ENCODE measurements at regions of chr1 and their contacts with region 1.

Region 1: DNA sequence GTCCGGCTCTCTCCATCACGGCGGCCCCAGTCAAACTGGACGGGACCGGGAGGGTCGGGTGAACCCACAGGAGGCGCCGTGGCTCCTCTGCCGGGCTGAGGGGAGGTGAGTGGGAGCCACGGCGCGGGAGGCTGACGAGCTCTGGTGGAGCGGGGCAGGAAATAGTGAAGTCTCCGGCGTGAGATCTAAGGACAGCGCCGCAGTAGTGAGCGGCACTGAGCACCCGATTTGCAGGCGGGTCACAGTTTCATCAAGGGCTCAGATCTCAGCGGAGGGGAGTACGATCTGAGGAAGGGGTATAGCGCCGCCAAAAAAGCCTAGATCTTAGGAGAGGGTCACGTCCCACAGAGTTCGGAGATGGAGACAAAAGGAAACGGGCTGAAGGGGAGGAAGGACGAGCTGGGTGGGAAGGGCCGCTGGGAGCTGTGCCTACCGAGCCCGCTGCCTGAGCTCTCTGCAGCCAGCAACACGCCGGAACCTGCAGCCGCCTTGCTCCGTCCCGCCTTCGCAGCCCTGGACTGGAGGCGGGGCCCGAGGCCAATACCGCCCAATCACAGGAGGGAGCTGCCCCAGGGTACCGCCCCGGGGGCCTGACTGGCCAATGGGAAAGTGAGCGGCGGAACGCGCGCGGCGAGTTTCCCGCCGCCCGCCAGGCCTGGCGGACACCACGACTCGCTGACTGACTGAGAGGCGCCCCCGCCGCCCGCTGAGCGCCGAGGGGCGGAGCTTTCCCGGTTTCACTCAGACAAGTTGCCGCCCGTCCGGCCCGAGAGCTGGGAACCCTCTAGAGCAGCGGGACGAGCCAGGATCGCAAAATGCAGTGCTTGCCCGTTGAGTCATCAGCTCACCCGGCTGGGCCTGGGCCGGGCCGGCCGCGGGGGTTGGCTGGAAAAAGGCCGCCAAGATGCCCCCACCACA is 1.9 kb downstream of the SFN start:
- DNase-seq: peak; percentile 96 to 99 (median 98)
- ATAC-seq: peak; percentile 98 to 99 (median 98)
- H3K4me3 ChIP-seq: peak overlapping the region; percentile 22 to 78 (median 66)
- H3K27ac ChIP-seq: peak overlapping the region; percentile 86 to 99 (median 95)
- H3K4me1 ChIP-seq: peaks cover 0 to 19% (median 9%) of the 10 kb centered on the region in 12 donors
- H3K27me3 ChIP-seq: no peaks in the 10 kb centered on the region
- CTCF ChIP-seq: peak in 2 of 12 donors; percentile 4 to 8
- POLR2A ChIP-seq: peak in 1 of 2 donors; percentile 74

Region 2: DNA sequence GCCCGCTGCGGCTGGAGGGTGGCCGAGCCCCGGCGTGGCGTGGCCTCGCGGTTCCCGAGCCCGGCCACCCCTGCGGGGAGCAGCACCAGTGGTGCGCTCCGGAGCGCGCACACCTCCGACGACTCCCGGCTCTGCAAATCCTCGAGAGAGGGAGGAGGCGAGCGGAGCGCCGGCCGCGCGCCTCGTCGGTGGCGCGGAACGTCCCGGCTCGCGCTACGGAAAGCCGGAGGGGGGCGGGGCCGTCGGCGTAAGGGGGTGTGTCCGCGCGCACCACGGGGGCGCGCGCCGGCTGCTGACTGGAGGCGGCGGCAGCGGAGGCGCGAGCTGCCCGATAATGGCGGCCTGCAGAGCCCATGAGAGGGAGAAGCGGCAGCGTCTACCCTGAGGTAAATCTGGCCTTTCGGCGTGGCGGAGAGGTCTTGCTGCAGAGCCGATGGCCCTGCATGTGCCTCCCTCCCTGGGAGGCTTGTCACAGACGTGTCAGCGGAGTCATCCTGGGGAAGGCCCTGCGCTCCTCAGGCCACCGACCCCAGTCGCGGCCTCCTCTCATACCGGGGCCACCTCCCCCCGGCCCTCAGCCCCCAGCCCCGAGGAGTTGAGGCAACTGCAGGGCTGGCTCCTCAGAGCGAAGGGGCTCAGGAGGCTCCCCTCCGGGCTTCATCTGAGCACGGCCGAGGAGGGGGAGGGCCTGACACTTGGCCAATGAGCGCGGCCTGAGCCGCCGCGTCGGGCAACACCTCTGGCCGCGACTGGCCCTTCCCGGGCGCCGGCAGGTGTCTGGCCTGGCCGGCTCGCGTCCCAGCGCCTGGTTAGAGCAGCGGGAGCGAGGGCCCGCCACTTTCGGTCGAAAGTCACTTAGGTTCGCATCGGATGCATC is 753.1 kb before region 1 on chr1 and contains the start of gene PDIK1L:
- intact Hi-C with region 1: no loop called
- DNase-seq: peak; percentile 95 to 97 (median 96)
- ATAC-seq: peak; percentile 84 to 94 (median 92)
- H3K4me3 ChIP-seq: peak within 1 kb of the TSS; percentile 61 to 99 (median 96)
- H3K27ac ChIP-seq: peak within 1 kb of the TSS; percentile 86 to 99 (median 97)
- H3K4me1 ChIP-seq: peaks cover 0 to 40% (median 30%) of the 10 kb centered on the region in 12 donors
- H3K27me3 ChIP-seq: no peaks in the 10 kb centered on the region
- CTCF ChIP-seq: peak in 2 of 12 donors; percentile 13 to 18
- POLR2A ChIP-seq: peak in 1 of 2 donors; percentile 73
- total RNA-seq, gene PDIK1L: 3.9 to 9.3 (median 6.0) TPM

Region 3: GRCh38 chr1:26811057-26811456 is 53.8 kb before region 1 on chr1:
- intact Hi-C with region 1: loop called in 1 of 10 experiments (anchors 5 kb)
- DNase-seq: no peak
- ATAC-seq: no peak
- H3K4me3 ChIP-seq: no peak overlapping the region
- H3K27ac ChIP-seq: no peak overlapping the region
- H3K4me1 ChIP-seq: peaks cover 0 to 18% (median 0%) of the 10 kb centered on the region in 12 donors
- H3K27me3 ChIP-seq: no peaks in the 10 kb centered on the region
- CTCF ChIP-seq: no peak
- POLR2A ChIP-seq: no peak

Region 4: DNA sequence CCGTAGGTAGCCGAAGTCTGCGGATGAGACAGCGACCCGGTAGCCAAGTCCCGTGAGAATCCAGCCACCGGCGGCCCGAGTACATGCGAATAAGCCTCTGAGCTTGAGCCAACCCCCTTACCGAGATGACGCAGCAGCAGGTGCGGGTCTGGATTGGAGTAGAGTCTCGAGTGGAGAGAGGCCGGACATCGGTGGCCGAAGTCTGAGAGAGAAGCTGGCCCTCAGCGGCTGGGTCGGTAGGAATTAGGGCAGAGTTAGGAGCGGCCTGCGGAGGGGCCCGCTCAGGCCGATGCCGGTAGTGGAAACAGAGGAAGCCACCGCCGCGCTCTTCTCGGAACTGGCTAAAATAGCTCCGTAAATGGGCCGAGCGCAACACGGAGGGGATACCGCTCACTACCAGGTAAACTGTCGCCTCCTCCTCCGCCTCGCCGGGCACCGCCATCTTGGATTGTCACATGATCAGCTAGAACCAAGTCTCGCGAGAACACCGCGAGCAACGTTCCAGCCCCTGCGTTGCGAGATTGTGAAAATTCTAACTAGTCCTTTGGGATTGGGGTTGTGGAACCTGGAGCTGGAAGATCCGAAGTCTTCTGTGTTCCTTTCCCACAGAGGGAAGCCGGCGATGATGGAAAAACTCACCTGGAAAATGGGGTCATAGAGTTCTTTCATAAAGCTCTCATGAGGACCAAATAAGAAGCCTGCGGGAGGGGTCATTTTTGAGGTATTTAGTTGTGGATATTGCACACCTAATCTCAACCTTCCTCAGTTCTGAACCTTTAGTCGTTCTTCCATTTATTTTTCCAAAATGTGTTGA is 35.3 kb after region 1 on chr1 and contains the start of gene GPATCH3:
- intact Hi-C with region 1: no loop called
- DNase-seq: peak; percentile 91 to 96 (median 94)
- ATAC-seq: peak; percentile 76 to 93 (median 92)
- H3K4me3 ChIP-seq: peak within 1 kb of the TSS; percentile 40 to 98 (median 86)
- H3K27ac ChIP-seq: peak within 1 kb of the TSS; percentile 45 to 91 (median 80)
- H3K4me1 ChIP-seq: peaks cover 0 to 26% (median 12%) of the 10 kb centered on the region in 12 donors
- H3K27me3 ChIP-seq: no peaks in the 10 kb centered on the region
- CTCF ChIP-seq: no peak
- POLR2A ChIP-seq: peak in 1 of 2 donors; percentile 47
- total RNA-seq, gene GPATCH3: 6.0 to 14.9 (median 9.0) TPM

Measured in heart left ventricle (tissue), 16 donors.